ENCODE measurements at regions of chr1 and their contacts with region 1.

Region 1: DNA sequence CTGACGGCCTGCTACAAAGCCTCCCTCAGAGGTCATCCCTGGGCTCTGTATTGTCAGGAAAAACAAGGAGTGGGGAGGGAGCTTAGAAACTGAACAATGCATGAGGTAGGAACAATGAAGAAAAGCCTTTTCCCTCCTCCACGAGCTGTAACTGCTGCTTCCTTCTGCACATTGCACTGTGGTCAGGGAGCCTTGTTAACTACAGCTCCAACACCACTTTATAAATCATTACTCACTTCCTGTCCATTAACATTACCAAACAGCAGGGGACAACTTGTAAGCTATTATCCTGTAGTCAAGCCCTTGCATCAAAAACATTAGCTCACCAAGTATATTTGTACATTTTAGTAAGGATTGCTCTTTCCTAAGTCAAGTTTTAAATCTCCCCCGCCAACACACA is 336.0 kb upstream of the NR5A2 start:
- DNase-seq: peak; percentile 74
- H3K4me3 ChIP-seq: no peak overlapping the region
- H3K27ac ChIP-seq: no peak overlapping the region
- H3K4me1 ChIP-seq: peaks cover 17% of the 10 kb centered on the region
- H3K27me3 ChIP-seq: no peaks in the 10 kb centered on the region
- CTCF ChIP-seq: peak in 1 of 2 donors; percentile 10

Region 2: GRCh38 chr1:199909135-199909534 is 217.6 kb after region 1 on chr1:
- CTCF ChIA-PET with region 1: no interaction called
- dilution Hi-C with region 1: no loop called
- in situ Hi-C with region 1: no loop called
- intact Hi-C with region 1: loop called (anchors 5 kb)
- DNase-seq: peak; percentile 48
- H3K4me3 ChIP-seq: no peak overlapping the region
- H3K27ac ChIP-seq: no peak overlapping the region
- H3K4me1 ChIP-seq: peaks cover 8% of the 10 kb centered on the region
- H3K27me3 ChIP-seq: no peaks in the 10 kb centered on the region
- CTCF ChIP-seq: no peak

Measured in mammary epithelial cell (primary cell).